ENCODE measurements at regions of chr1 and their contacts with region 1.

Region 1: GRCh38 chr1:109548321-109549267 is at the start of gene GNAI3:
- DNase-seq: peak; percentile 98
- ATAC-seq: peak; percentile 97
- total RNA-seq, gene GNAI3: 2.4 TPM

Region 2: DNA sequence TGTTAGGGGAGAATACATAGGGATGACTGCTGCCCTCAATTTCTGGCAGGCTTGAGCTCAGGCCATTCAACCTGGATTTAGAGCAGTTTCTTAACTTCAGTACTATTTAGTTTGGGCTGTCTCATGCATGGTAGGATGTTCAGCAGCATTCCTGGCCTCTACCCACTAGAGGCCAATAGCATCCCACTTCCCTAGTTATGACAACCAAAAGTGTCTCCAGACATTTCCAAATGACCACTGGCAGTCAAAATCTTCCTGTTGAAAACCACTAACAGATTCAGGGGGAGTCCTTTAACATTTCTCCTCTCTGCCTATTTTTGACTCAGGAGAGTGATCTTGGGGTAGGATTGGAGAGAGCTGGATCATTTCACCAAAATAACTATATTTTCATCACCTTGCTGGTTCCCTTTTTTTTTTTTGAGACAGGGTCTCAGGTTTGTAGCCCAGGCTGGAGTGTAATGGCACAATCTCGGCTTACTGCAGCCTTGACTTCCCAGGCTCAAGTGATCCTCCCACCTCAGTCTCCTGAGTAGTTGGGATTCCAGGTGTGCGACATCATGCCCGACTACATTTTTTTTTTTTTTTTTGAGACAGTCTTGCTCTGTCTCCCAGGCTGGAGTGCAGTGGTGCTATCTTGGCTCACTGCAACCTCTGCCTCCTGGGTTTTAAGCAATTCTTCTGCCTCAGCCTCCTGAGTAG is 62.2 kb after region 1 on chr1:
- intact Hi-C with region 1: no loop called
- DNase-seq: no peak
- ATAC-seq: no peak

Region 3: DNA sequence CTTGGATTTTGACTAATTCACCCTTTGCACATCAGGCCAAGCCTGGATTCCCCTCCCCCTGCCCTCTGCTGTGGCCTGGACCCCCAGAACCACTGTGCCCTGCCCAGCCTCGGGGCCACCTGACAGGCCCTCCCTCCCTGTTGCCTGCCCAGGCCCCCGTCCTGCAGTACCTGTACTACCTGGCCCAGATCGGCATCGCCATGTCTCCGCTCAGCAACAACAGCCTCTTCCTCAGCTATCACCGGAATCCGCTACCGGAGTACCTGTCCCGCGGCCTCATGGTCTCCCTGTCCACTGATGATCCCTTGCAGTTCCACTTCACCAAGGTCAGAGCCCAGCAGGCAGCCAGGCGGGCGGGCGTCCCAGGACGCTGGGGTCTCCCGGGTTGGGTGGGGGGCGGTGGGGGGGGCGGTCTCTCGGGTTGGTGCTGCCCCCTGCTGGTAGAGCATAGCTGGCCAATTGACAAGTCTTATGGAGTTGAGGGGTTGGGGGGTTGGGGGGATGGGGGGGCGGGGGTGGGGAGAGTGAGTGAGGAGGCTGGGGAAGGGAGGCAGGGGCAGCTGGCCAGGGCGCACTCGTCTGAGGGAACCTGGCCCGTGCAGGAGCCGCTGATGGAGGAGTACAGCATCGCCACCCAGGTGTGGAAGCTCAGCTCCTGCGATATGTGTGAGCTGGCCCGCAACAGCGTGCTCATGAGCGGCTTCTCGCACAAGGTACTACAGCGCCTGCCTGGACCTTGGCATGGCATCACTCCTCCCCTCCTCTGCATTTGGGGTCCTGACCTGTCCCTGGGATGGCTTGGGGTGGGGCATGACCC is 81.7 kb after region 1 on chr1:
- intact Hi-C with region 1: loop called (anchors 5 kb)
- DNase-seq: no peak
- ATAC-seq: no peak

Region 4: GRCh38 chr1:109910123-109910962 is 361.7 kb after region 1 on chr1 and contains the start of gene CSF1:
- intact Hi-C with region 1: no loop called
- DNase-seq: peak; percentile 90
- ATAC-seq: peak; percentile 80
- total RNA-seq, gene CSF1: 16.0 TPM

Region 5: GRCh38 chr1:109984456-109985275 is 436.1 kb after region 1 on chr1 and contains the start of gene AHCYL1:
- intact Hi-C with region 1: loop called (anchors 5 kb)
- DNase-seq: peak; percentile 100
- ATAC-seq: peak; percentile 96
- total RNA-seq, gene AHCYL1: 39.8 TPM

Measured in Right ventricle myocardium superior (tissue), 1 donor.